ENCODE measurements at regions of chr20 and their contacts with region 1.

Region 1: GRCh38 chr20:46520976-46521579 is 7.7 kb upstream of the ZNF334 start:
- DNase-seq: peak; percentile 39
- H3K4me3 Mint-ChIP-seq: no peak overlapping the region
- H3K27ac Mint-ChIP-seq: no peak overlapping the region
- H3K4me1 Mint-ChIP-seq: no peaks in the 10 kb centered on the region
- H3K27me3 Mint-ChIP-seq: no peaks in the 10 kb centered on the region

Region 2: DNA sequence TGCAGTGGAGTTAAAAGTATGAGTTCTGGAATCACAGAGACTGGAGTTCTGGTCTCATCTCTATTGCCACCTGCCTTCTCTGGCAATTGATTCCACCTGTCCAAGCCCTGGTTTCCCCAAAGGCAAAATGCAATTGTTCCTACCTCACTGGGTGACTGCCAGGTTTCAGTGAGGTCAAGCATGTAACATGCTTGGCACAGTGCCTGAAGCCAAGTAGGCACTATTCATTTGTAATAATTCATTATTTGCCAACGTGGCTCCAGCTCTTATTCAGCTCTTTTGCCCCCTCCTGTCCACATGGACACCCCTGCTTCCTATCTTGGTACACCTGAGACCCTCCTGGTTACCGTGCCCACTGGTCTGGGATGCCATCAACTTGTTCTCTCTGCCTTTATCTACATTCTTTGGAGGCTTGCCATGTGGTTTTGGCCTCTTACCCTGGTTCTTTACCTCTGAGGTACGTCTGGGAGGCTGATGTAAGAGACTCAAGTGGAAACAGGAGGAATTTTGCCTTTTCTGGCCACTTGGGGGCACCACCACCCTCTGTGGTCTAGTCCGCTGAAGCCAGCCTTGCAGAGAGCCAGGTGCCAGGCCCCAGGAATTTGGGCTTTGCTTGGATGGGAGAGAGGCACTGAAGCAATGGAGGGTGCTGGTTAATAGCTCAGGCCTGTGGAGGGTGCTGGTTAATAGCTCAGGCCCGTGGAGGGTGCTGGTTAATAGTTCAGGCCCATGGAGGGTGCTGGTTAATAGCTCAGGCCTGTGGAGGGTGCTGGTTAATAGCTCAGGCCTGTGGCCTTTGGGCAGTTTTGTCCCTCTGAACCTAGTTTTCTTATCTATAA is 1773.7 kb before region 1 on chr20:
- intact Hi-C with region 1: loop called (anchors 10 kb)
- DNase-seq: peak; percentile 34
- H3K4me3 Mint-ChIP-seq: peak overlapping the region; percentile 71
- H3K27ac Mint-ChIP-seq: peak overlapping the region; percentile 72
- H3K4me1 Mint-ChIP-seq: peaks cover 18% of the 10 kb centered on the region
- H3K27me3 Mint-ChIP-seq: peaks cover 26% of the 10 kb centered on the region

Region 3: GRCh38 chr20:46562373-46563169 is 41.5 kb after region 1 on chr20:
- intact Hi-C with region 1: loop called (anchors 1 kb)
- DNase-seq: peak; percentile 53
- H3K4me3 Mint-ChIP-seq: no peak overlapping the region
- H3K27ac Mint-ChIP-seq: no peak overlapping the region
- H3K4me1 Mint-ChIP-seq: peaks cover 36% of the 10 kb centered on the region
- H3K27me3 Mint-ChIP-seq: peaks cover 6% of the 10 kb centered on the region

Region 4: DNA sequence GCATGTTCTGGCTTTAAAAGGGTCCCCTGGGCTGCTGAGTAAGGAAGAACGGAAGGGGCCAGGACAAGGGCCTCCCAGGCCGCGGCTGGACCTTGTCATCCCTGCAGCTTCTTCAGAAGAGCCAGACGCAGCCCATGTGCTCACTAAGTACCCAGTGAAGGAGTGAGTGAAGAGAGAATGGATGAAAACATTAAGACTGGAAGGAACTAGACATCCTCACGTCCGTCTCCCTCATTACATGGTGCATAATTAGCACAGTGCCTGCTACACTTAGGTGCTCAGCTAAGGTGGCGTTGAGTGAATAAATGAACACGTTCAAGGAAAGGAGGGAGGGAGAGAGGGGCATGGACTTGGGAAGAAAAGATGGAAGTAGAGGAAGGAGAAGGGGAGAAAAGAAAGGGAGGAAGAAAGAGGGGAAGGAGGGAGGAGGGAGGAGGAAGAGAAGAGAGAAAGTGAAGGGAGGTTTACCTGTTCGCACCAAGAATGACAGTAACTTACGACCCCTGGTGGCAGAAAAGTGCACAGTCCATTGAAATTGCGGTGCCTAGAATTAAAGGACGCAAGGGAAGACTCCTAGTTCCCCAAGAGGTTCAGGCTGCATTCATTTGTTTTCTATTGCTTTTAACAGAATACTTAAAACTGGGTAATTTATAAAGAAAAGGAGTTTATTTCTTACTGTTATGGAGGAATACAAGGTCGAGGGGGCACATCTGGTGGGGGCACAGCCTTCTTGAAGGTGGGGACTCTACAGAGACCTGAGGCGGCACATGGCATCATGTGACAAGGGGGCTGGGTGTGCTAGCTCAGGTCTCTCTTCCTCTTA is 160.2 kb after region 1 on chr20:
- intact Hi-C with region 1: loop called (anchors 1 kb)
- DNase-seq: peak; percentile 57
- H3K4me3 Mint-ChIP-seq: no peak overlapping the region
- H3K27ac Mint-ChIP-seq: no peak overlapping the region
- H3K4me1 Mint-ChIP-seq: peaks cover 32% of the 10 kb centered on the region
- H3K27me3 Mint-ChIP-seq: no peaks in the 10 kb centered on the region

Region 5: GRCh38 chr20:46752728-46753127 is 231.7 kb after region 1 on chr20:
- intact Hi-C with region 1: loop called (anchors 2 kb)
- DNase-seq: peak; percentile 24
- H3K4me3 Mint-ChIP-seq: no peak overlapping the region
- H3K27ac Mint-ChIP-seq: no peak overlapping the region
- H3K4me1 Mint-ChIP-seq: peaks cover 6% of the 10 kb centered on the region
- H3K27me3 Mint-ChIP-seq: peaks cover 6% of the 10 kb centered on the region